HCT116 (cell line): ENCODE measurements at regions of chr13 and their contacts with region 1.

Region 1: GRCh38 chr13:40666045-40666904 is at the start of gene FOXO1:
- DNase-seq: peak; percentile 58
- ATAC-seq: peak; percentile 79
- H3K4me3 ChIP-seq: peak within 1 kb of the TSS; percentile 68 to 91
- H3K27ac ChIP-seq: peak within 1 kb of the TSS; percentile 85
- H3K4me1 ChIP-seq: peaks cover 9 to 29% of the 10 kb centered on the region in 2 experiments
- H3K27me3 ChIP-seq: no peaks in the 10 kb centered on the region
- CTCF ChIP-seq: no peak
- POLR2A ChIP-seq: peak; percentile 75
- RAD21 ChIP-seq: no peak
- total RNA-seq, gene FOXO1: 12.2 TPM

Region 2: DNA sequence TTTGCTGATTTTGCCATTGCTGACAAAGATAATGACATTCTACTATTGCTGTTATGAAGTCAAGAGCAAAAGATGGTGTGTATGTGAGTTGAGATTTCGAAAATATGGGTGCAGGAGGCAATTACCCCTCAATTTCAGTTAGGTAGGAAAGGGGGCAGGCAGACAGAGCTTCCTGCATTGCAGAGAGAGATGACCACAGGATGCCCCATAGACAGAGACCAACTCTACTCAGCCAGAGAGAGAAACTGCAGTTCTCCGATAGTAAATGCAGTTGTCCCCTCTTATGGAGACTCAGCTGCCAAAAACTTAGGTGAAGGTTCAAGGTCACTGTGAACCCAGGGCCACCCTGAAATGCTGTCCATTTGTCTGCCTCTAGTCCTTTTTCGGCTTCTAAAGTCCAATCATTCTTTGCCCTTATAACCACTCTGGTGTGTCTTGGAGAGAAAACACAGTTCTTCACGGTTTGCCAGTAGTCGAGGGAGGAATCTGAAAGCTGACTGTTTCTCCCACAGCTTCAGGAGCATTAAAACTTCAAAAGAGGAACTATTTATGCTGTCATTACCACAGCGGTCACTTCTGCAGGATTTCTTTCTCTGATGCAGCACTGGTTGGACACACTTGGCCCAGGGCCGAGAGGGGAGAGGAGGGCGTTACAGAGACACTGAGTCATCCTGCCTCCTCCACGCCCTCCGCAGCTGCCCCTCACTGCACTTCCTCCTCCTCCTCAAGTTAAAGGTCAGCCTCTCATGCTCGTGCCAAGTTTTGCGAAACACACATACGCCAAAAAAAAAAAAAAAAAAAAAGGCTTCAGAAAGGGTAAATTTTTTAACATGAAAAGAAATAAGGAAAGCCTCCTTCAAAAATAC is 264.1 kb before region 1 on chr13:
- CTCF ChIA-PET with region 1: no interaction called
- POLR2A ChIA-PET with region 1: no interaction called
- RAD21 ChIA-PET with region 1: no interaction called
- intact Hi-C with region 1: loop called (anchors 2 kb)
- DNase-seq: peak; percentile 64
- ATAC-seq: peak; percentile 81
- H3K4me3 ChIP-seq: peak overlapping the region; percentile 6 to 32; a peak in 3 of 4 replicates
- H3K27ac ChIP-seq: peak overlapping the region; percentile 38; the same call in 1 of the 2 replicates
- H3K4me1 ChIP-seq: peaks cover 29 to 50% of the 10 kb centered on the region in 2 experiments
- H3K27me3 ChIP-seq: no peaks in the 10 kb centered on the region
- CTCF ChIP-seq: no peak
- POLR2A ChIP-seq: no peak
- RAD21 ChIP-seq: peak; percentile 11; the same call in 1 of the 2 replicates

Region 3: DNA sequence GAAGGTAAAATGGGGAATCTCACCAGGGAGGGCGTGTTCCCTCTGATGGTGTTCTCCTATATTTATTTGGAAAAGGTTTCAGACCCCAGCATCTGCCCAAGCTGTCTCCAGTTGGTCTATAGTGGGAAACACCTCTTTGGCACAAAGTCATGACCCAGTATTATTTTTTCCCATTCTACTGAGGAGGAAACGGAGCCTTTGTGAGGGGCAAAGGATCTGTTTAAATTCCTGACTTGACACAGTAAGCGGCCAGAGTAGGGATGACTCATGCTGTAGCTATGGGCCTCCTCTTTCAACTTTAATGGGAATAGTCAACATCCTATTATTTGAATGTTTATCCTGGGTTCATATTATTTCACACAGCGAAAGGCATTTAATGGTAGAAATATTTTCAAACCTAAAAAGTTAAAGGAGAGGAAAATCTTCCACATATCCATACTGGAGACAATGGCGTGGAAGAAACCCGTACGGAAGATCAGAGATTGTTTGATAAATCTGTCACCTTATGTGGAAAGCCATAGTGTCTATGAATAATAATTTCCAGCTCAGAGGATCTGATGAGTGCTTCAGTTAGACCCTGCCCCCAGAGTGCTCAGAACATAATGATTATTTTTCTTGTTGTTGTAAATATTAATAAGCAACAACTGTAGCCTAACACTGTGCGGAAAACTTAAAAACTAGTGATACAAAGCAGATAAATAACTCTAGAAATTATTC is 125.8 kb before region 1 on chr13:
- CTCF ChIA-PET with region 1: no interaction called
- POLR2A ChIA-PET with region 1: no interaction called
- RAD21 ChIA-PET with region 1: no interaction called
- intact Hi-C with region 1: loop called (anchors 5 kb)
- DNase-seq: peak; percentile 48
- ATAC-seq: peak; percentile 93
- H3K4me3 ChIP-seq: peak overlapping the region in 1 of 2 experiments; percentile 35; a peak in 2 of 4 replicates
- H3K27ac ChIP-seq: peak overlapping the region; percentile 16; the same call in 1 of the 2 replicates
- H3K4me1 ChIP-seq: peaks cover 18 to 27% of the 10 kb centered on the region in 2 experiments
- H3K27me3 ChIP-seq: no peaks in the 10 kb centered on the region
- CTCF ChIP-seq: no peak
- POLR2A ChIP-seq: no peak
- RAD21 ChIP-seq: no peak

Region 4: DNA sequence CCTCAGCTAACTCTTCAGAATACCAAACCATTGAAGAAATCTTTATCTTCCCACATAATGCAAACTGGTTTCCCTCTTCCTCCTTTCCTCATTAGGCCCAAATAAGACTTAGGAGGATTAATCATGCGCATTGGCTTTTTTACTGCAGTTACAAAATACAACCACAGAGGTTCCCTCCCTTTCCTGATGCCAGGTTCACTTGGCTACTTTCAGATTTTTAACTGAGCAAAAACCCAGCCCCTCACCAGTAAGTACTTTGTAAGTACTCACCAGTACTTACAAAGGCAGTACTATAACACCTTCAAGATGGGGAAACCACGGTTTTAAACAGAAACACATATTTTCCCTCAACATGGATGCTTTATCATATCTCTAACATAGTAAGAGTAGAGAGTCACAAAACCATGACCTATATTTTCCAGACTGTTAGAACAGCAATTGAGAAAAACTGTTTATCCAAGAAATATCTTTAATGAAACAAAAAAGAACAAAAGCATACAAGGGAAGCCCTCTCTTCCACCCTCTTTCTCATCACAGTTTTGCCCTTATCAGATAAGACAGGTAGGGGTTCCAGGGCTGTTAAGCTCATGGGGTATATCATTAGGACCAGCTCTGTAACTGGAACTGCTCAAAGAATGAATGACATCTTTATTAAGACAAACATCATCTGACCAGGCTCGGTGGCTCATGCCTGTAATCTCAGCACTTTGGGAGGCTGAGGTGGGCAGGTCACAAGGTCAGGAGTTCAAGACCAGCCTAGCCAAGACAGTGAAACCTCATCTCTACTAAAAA is 12.6 kb before region 1 on chr13:
- CTCF ChIA-PET with region 1: no interaction called
- POLR2A ChIA-PET with region 1: no interaction called
- RAD21 ChIA-PET with region 1: no interaction called
- intact Hi-C with region 1: no loop called
- DNase-seq: no peak
- ATAC-seq: 0 out of 2 replicates have a peak, but pooled peaks have one; percentile 22
- H3K4me3 ChIP-seq: no peak overlapping the region
- H3K27ac ChIP-seq: no peak overlapping the region
- H3K4me1 ChIP-seq: no peaks in the 10 kb centered on the region
- H3K27me3 ChIP-seq: no peaks in the 10 kb centered on the region
- CTCF ChIP-seq: no peak
- POLR2A ChIP-seq: no peak
- RAD21 ChIP-seq: no peak

Region 5: GRCh38 chr13:40933508-40934204 is 267.4 kb after region 1 on chr13:
- CTCF ChIA-PET with region 1: no interaction called
- POLR2A ChIA-PET with region 1: no interaction called
- RAD21 ChIA-PET with region 1: no interaction called
- intact Hi-C with region 1: no loop called
- DNase-seq: no peak
- ATAC-seq: no peak
- H3K4me3 ChIP-seq: no peak overlapping the region
- H3K27ac ChIP-seq: no peak overlapping the region
- H3K4me1 ChIP-seq: no peaks in the 10 kb centered on the region
- H3K27me3 ChIP-seq: no peaks in the 10 kb centered on the region
- CTCF ChIP-seq: no peak
- POLR2A ChIP-seq: no peak
- RAD21 ChIP-seq: no peak